Mammary epithelial cell (primary cell): ENCODE measurements at regions of chr2 and their contacts with region 1.

Region 1: DNA sequence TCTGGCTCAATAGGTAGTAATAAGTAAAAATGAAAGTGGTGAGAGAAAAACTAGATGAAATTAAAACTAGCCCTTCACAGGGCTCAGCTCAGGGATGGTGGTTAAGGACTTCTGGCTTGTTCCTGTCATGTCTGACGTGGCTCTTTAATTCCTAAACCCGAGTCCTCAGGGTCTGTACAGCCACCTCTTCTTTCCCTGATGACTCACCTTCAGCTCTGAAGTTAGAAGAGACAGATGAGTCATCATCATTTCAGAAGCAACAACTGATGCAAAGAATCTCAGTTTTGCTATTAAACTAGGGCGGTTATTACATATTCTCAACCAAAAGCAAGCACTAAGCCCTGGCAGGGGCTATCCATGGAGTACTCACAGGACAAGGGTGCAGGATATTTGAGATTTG is 24.0 kb upstream of the ITGB6 start:
- DNase-seq: peak; percentile 97
- H3K4me3 ChIP-seq: no peak overlapping the region
- H3K27ac ChIP-seq: peak overlapping the region; percentile 99
- H3K4me1 ChIP-seq: peaks cover 95% of the 10 kb centered on the region
- H3K27me3 ChIP-seq: no peaks in the 10 kb centered on the region
- CTCF ChIP-seq: no peak

Region 2: DNA sequence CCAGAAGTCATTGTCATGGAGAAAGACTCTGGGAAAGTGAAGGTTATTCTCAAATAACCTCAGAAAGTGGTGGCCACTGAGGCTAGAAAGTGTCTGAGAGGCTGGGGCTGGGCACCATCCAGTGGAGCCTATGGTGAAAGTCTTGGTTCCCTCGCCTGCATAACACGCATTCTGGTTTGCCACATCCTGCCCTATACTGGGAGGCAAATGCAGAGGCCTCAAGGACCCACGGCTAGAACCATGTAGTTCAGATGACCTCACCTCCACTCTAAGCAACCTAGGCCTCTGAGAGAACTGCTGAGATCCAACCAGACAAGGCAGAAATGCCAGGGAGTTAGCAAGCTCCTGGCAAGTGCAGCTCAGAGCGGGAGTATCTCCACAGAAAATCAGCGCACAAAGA is 29.1 kb before region 1 on chr2:
- CTCF ChIA-PET with region 1: no interaction called
- dilution Hi-C with region 1: no loop called
- in situ Hi-C with region 1: no loop called
- intact Hi-C with region 1: loop called (anchors 5 kb)
- DNase-seq: no peak
- H3K4me3 ChIP-seq: no peak overlapping the region
- H3K27ac ChIP-seq: peak overlapping the region; percentile 43
- H3K4me1 ChIP-seq: peaks cover 38% of the 10 kb centered on the region
- H3K27me3 ChIP-seq: no peaks in the 10 kb centered on the region
- CTCF ChIP-seq: peak in 1 of 2 donors; percentile 1

Region 3: GRCh38 chr2:160207804-160208661 is 16.0 kb before region 1 on chr2:
- CTCF ChIA-PET with region 1: interaction called, 3 read pairs
- dilution Hi-C with region 1: no loop called
- in situ Hi-C with region 1: no loop called
- intact Hi-C with region 1: loop called (anchors 1 kb)
- DNase-seq: peak; percentile 98
- H3K4me3 ChIP-seq: no peak overlapping the region
- H3K27ac ChIP-seq: peak overlapping the region; percentile 97
- H3K4me1 ChIP-seq: peaks cover 74% of the 10 kb centered on the region
- H3K27me3 ChIP-seq: no peaks in the 10 kb centered on the region
- CTCF ChIP-seq: no peak

Region 4: DNA sequence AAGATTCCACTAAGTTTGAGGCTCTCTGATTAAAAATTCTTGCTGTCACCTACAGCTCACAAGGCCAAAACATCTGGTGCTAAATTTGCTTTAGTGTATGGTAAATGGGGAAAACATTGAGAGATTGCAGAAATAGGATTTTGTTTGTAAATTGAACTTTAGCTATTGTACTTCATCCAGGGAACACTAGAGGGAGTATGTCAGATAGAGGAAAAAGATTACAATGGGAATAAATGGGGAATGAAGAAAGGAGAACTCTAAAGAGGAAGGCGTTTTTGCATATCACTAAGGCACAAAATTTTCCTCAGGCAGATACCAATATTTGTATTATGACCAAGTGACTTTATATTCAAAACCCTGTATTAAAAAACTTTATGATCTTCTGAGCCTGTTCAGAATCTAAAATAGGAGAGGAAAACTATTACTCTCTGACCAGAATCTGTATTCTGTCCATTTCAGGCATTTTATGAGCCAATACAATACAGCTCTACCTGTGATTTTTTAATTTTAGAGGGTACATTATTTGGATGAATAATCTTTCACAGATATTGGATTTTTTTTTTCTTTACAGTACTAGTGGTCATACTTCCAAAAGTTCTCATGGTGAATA is 28.3 kb after region 1 on chr2:
- CTCF ChIA-PET with region 1: no interaction called
- dilution Hi-C with region 1: no loop called
- in situ Hi-C with region 1: no loop called
- intact Hi-C with region 1: loop called (anchors 1 kb)
- DNase-seq: no peak
- H3K4me3 ChIP-seq: no peak overlapping the region
- H3K27ac ChIP-seq: no peak overlapping the region
- H3K4me1 ChIP-seq: peaks cover 16% of the 10 kb centered on the region
- H3K27me3 ChIP-seq: no peaks in the 10 kb centered on the region
- CTCF ChIP-seq: peak; percentile 76 to 83

Region 5: GRCh38 chr2:160294339-160294803 is 70.3 kb after region 1 on chr2:
- CTCF ChIA-PET with region 1: no interaction called
- dilution Hi-C with region 1: loop called (anchors 5 kb)
- in situ Hi-C with region 1: no loop called
- intact Hi-C with region 1: no loop called
- DNase-seq: peak; percentile 42
- H3K4me3 ChIP-seq: no peak overlapping the region
- H3K27ac ChIP-seq: peak overlapping the region; percentile 78
- H3K4me1 ChIP-seq: peaks cover 34% of the 10 kb centered on the region
- H3K27me3 ChIP-seq: no peaks in the 10 kb centered on the region
- CTCF ChIP-seq: no peak

Region 6: GRCh38 chr2:160406591-160407392 is 182.7 kb after region 1 on chr2:
- CTCF ChIA-PET with region 1: no interaction called
- dilution Hi-C with region 1: loop called (anchors 5 kb)
- in situ Hi-C with region 1: no loop called
- intact Hi-C with region 1: loop called (anchors 10 kb)
- DNase-seq: peak; percentile 80
- H3K4me3 ChIP-seq: peak overlapping the region; percentile 76 to 85 (median 84)
- H3K27ac ChIP-seq: peak overlapping the region; percentile 87
- H3K4me1 ChIP-seq: peaks cover 64% of the 10 kb centered on the region
- H3K27me3 ChIP-seq: no peaks in the 10 kb centered on the region
- CTCF ChIP-seq: no peak